MCF 10A (cell line): ENCODE measurements at regions of chr12 and their contacts with region 1.

Region 1: GRCh38 chr12:12890815-12891645 is at the start of gene GPRC5A:
- DNase-seq: peak; percentile 97
- H3K4me3 Mint-ChIP-seq: peak within 1 kb of the TSS; percentile 82
- H3K27ac Mint-ChIP-seq: peak within 1 kb of the TSS; percentile 87
- H3K4me1 Mint-ChIP-seq: peaks cover 31% of the 10 kb centered on the region
- H3K27me3 Mint-ChIP-seq: no peaks in the 10 kb centered on the region
- CTCF ChIP-seq: peak; percentile 30
- total RNA-seq, gene GPRC5A: 24.1 and 42.1 TPM in 2 replicates

Region 2: DNA sequence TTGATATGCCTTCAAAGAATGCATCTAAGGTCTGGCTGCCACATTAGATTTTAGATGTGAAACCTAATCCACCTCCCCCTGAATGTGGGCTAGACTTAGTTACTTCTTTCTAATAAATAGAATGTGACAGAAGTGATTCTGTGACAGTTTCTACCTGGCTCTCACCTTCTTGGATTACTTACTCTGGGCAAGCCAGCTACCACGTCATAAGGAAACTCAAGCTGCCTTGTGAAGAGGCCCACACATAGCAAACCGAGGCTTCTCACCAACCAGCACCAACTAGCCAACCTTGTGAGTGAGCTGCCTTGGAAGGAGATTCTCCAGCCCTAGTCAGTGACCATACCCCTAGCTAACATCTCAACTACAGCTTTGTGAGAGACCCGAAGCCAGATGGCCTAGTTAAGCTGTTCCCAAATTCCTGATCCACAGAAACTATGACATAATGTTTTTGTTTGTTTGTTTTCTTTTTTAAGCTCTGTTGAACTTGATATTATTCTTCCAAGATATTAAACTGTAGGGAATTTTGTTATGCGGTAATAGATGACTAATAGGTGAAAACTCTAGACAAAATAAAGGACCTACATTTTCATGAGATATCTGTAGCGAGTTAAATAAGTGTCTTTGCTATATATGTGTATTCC is 201.3 kb before region 1 on chr12:
- CTCF ChIA-PET with region 1: no interaction called
- POLR2A ChIA-PET with region 1: no interaction called
- intact Hi-C with region 1: no loop called
- DNase-seq: no peak
- H3K4me3 Mint-ChIP-seq: no peak overlapping the region
- H3K27ac Mint-ChIP-seq: no peak overlapping the region
- H3K4me1 Mint-ChIP-seq: no peaks in the 10 kb centered on the region
- H3K27me3 Mint-ChIP-seq: no peaks in the 10 kb centered on the region
- CTCF ChIP-seq: no peak

Region 3: GRCh38 chr12:12724661-12725545 is 166.1 kb before region 1 on chr12:
- CTCF ChIA-PET with region 1: interaction called, 3 read pairs
- POLR2A ChIA-PET with region 1: interaction called, 16 read pairs
- intact Hi-C with region 1: loop called (anchors 5 kb)
- DNase-seq: peak; percentile 97
- H3K4me3 Mint-ChIP-seq: peak overlapping the region; percentile 98
- H3K27ac Mint-ChIP-seq: peak overlapping the region; percentile 99
- H3K4me1 Mint-ChIP-seq: peaks cover 18% of the 10 kb centered on the region
- H3K27me3 Mint-ChIP-seq: no peaks in the 10 kb centered on the region
- CTCF ChIP-seq: no peak

Region 4: DNA sequence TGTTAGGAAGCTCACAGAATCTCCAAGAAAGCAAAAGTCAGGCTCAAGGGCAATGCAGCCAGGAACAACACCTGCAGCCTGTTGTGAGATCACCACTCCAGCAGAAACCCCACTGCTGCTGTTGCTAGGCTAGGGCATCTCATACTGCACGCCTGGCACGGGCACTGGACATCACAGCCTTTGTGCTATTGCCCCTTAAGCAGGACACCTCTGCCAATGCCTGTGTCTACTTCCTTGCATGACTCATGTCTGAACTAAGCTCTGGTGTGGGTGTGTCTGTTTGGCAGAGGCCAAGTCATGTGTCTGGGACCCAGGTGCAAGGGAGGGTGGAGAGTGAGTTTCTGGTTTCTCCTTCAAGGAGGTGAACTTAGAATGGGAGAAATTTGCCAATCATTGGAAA is 87.8 kb before region 1 on chr12:
- CTCF ChIA-PET with region 1: interaction called, 3 read pairs
- POLR2A ChIA-PET with region 1: interaction called, 41 read pairs
- intact Hi-C with region 1: no loop called
- DNase-seq: peak; percentile 99
- H3K4me3 Mint-ChIP-seq: peak overlapping the region; percentile 11
- H3K27ac Mint-ChIP-seq: peak overlapping the region; percentile 67
- H3K4me1 Mint-ChIP-seq: peaks cover 48% of the 10 kb centered on the region
- H3K27me3 Mint-ChIP-seq: no peaks in the 10 kb centered on the region
- CTCF ChIP-seq: no peak

Region 5: GRCh38 chr12:12813120-12814101 is 77.6 kb before region 1 on chr12 and contains the start of gene DDX47:
- CTCF ChIA-PET with region 1: interaction called, 7 read pairs
- POLR2A ChIA-PET with region 1: interaction called, 28 read pairs
- intact Hi-C with region 1: no loop called
- DNase-seq: peak; percentile 92
- H3K4me3 Mint-ChIP-seq: peak within 1 kb of the TSS; percentile 99
- H3K27ac Mint-ChIP-seq: peak within 1 kb of the TSS; percentile 99
- H3K4me1 Mint-ChIP-seq: peaks cover 27% of the 10 kb centered on the region
- H3K27me3 Mint-ChIP-seq: no peaks in the 10 kb centered on the region
- CTCF ChIP-seq: peak; percentile 90
- total RNA-seq, gene DDX47: 47.0 and 47.7 TPM in 2 replicates

Region 6: DNA sequence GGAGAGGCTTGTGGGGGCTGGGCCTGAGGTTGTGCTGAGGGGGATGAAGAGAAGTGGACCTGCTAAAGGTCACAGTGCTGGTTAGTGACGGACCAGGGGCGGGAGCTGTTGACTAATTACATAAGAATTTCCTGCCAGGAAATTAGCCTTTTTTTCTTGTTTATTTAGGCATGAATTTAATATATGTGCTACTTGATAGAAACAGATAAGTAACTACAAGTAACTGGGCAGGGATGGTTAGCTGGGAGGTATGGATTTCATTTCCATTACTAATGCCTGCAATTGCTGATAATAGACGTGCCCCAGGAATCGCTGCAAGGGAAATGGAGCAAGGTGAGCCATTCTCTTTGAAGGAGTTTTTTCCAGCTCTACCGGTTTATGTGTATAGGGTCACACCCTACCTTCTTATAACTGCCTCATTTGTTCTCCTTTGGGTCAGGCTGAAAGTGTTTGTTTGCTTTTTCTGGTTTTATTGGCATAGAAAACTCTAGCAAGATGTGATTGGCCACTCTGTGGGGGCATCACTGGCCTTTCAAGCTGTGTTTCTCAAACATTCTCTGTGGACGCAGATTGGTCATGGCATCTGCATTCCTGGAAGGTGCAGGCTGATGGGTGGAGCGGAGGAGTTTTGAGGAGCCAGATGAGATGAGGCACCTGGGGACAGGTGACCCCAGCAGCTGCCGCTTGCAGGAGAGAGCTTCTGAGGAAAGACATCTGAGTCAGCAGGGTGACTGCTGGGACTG is 18.7 kb before region 1 on chr12:
- CTCF ChIA-PET with region 1: interaction called, 16 read pairs
- POLR2A ChIA-PET with region 1: interaction called, 25 read pairs
- intact Hi-C with region 1: no loop called
- DNase-seq: peak; percentile 49
- H3K4me3 Mint-ChIP-seq: no peak overlapping the region
- H3K27ac Mint-ChIP-seq: peak overlapping the region; percentile 77
- H3K4me1 Mint-ChIP-seq: peaks cover 32% of the 10 kb centered on the region
- H3K27me3 Mint-ChIP-seq: no peaks in the 10 kb centered on the region
- CTCF ChIP-seq: no peak

Region 7: DNA sequence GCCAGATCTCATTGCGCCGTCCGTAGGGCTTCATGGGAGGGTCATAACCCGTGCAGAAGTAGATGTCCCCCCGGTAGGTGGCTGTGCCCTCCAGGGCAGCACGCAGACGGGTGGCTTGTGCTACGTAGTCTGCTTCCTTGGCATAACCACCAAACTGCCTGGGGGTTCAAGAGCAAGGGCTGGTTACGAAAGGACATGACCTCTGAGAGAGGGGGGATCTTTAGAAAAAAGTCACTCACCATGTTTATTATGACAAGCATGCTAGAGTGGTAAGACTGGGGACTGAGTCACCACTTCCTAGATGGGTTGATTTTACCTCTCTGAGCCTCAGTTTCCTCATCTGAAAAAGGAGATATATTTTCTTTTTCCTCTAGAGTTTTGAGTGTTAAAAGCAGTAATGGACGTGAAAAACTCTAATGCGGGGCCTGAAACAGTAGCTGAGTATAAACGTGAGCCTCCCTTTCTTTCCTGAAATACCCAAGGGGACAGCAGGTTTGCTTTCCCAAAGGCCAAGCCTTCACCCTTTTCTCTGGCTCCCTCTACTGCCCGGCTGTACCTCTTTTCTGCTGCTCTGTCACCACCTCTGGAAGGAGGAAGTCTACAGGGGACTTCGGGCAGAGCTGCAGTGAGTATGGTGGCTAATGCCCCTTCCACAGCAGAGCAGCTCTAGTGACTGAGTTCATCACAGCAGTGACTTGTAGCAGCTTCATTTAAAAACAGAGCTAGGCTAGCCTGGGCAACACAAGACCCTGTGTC is 84.5 kb after region 1 on chr12:
- CTCF ChIA-PET with region 1: interaction called, 5 read pairs
- POLR2A ChIA-PET with region 1: interaction called, 12 read pairs
- intact Hi-C with region 1: no loop called
- DNase-seq: peak; percentile 55
- H3K4me3 Mint-ChIP-seq: no peak overlapping the region
- H3K27ac Mint-ChIP-seq: peak overlapping the region; percentile 85
- H3K4me1 Mint-ChIP-seq: peaks cover 12% of the 10 kb centered on the region
- H3K27me3 Mint-ChIP-seq: no peaks in the 10 kb centered on the region
- CTCF ChIP-seq: peak; percentile 23